Mammary epithelial cell (primary cell): ENCODE measurements at regions of chr7 and their contacts with region 1.

Region 1: GRCh38 chr7:13850185-13850752 is 139.2 kb downstream of the ETV1 start:
- DNase-seq: peak; percentile 98
- H3K4me3 ChIP-seq: no peak overlapping the region
- H3K27ac ChIP-seq: peak overlapping the region; percentile 61
- H3K4me1 ChIP-seq: peaks cover 31% of the 10 kb centered on the region
- H3K27me3 ChIP-seq: no peaks in the 10 kb centered on the region
- CTCF ChIP-seq: no peak

Region 2: GRCh38 chr7:13920053-13920697 is 69.9 kb after region 1 on chr7:
- CTCF ChIA-PET with region 1: no interaction called
- dilution Hi-C with region 1: no loop called
- in situ Hi-C with region 1: no loop called
- intact Hi-C with region 1: loop called (anchors 2 kb)
- DNase-seq: peak; percentile 100
- H3K4me3 ChIP-seq: peak overlapping the region in 2 of 3 experiments; percentile 28 to 29
- H3K27ac ChIP-seq: peak overlapping the region; percentile 91
- H3K4me1 ChIP-seq: peaks cover 9% of the 10 kb centered on the region
- H3K27me3 ChIP-seq: no peaks in the 10 kb centered on the region
- CTCF ChIP-seq: no peak

Region 3: GRCh38 chr7:13963925-13964324 is 113.7 kb after region 1 on chr7:
- CTCF ChIA-PET with region 1: no interaction called
- dilution Hi-C with region 1: no loop called
- in situ Hi-C with region 1: no loop called
- intact Hi-C with region 1: no loop called
- DNase-seq: no peak
- H3K4me3 ChIP-seq: no peak overlapping the region
- H3K27ac ChIP-seq: no peak overlapping the region
- H3K4me1 ChIP-seq: no peaks in the 10 kb centered on the region
- H3K27me3 ChIP-seq: no peaks in the 10 kb centered on the region
- CTCF ChIP-seq: no peak

Region 4: DNA sequence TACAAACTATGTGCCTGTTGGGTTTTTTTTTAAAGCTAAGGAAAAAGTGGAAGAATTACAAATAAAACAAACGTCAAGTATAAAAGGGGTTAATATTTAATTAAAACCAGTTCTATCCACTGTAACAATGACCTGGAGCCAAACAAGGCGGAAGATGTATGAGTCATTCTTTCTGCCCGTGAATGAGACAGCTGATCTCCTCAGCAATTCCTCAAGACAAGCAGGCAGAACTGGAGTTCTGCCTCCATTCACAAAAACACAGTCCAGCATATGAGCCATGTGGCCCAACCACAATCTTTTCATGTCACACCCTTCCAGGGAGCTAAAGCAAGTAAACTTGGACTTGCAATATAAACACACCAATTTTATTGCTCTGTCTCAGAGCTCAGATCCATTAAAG is 130.8 kb after region 1 on chr7:
- CTCF ChIA-PET with region 1: no interaction called
- dilution Hi-C with region 1: no loop called
- in situ Hi-C with region 1: no loop called
- intact Hi-C with region 1: loop called (anchors 2 kb)
- DNase-seq: peak; percentile 94
- H3K4me3 ChIP-seq: peak overlapping the region in 1 of 3 experiments; percentile 38
- H3K27ac ChIP-seq: peak overlapping the region; percentile 60
- H3K4me1 ChIP-seq: peaks cover 21% of the 10 kb centered on the region
- H3K27me3 ChIP-seq: no peaks in the 10 kb centered on the region
- CTCF ChIP-seq: no peak